GM12878 (cell line): ENCODE measurements at regions of chr11 and their contacts with region 1.

Region 1: DNA sequence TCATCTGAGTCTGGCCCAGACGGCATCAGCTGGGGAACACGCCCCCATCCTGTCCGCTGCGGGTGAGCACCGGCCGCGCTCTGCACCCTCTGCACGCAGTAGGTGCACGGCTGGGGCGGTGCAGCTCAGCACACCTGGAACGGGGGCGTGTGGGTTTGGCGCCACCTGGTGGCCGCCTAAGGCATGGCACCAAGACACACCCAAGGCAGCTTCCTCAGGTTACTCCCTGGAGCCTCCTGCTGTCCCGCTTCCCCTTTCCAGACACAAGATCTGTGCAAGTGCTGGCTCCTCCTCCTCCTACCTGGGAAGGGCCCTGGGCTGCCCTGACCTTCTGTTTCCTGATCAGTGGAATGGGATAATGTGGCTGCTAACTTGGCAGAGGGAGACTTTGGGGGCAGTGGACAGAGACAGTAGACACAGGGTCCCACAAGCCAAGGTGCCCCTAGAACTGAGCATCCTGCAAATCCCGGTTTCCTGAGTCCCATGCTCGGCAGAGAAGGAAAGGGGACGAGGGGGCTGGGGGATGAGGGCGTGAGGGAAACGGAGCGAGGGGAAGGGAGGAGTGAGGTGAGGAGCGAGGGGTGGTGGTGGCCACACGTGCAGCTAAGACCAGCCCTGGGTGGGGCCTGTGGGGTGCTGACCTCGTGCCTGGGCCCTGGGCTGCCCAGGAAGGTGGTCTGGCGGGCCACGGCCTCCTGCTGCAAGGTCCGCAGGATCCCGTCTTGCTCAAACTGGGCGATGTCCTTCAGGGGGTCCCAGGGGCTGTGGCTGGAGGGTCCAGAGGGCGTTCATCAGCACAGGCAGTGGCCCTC is 34.8 kb upstream of the CARS1 start:
- DNase-seq: peak; percentile 19
- ATAC-seq: peak; percentile 97
- H3K4me3 ChIP-seq: no peak overlapping the region
- H3K27ac ChIP-seq: no peak overlapping the region
- H3K4me1 ChIP-seq: no peaks in the 10 kb centered on the region
- H3K27me3 ChIP-seq: no peaks in the 10 kb centered on the region
- CTCF ChIP-seq: peak; percentile 98
- EP300 ChIP-seq: no peak
- POLR2A ChIP-seq: no peak
- RAD21 ChIP-seq: peak; percentile 85

Region 2: GRCh38 chr11:2892215-2893020 is 199.6 kb before region 1 on chr11:
- CTCF ChIA-PET with region 1: interaction called, 11 read pairs
- POLR2A ChIA-PET with region 1: no interaction called
- RAD21 ChIA-PET with region 1: interaction called, 8 read pairs
- SMC1A ChIA-PET with region 1: interaction called, 3 read pairs
- in situ Hi-C with region 1: no loop called
- intact Hi-C with region 1: no loop called
- DNase-seq: no peak
- ATAC-seq: peak; percentile 80
- H3K4me3 ChIP-seq: peak overlapping the region; percentile 58
- H3K27ac ChIP-seq: no peak overlapping the region
- H3K4me1 ChIP-seq: peaks cover 4% of the 10 kb centered on the region
- H3K27me3 ChIP-seq: no peaks in the 10 kb centered on the region
- CTCF ChIP-seq: peak; percentile 82 to 92 (median 83)
- EP300 ChIP-seq: no peak
- POLR2A ChIP-seq: peak; percentile 59; the same call in 1 of the 2 replicates
- RAD21 ChIP-seq: peak; percentile 67

Region 3: DNA sequence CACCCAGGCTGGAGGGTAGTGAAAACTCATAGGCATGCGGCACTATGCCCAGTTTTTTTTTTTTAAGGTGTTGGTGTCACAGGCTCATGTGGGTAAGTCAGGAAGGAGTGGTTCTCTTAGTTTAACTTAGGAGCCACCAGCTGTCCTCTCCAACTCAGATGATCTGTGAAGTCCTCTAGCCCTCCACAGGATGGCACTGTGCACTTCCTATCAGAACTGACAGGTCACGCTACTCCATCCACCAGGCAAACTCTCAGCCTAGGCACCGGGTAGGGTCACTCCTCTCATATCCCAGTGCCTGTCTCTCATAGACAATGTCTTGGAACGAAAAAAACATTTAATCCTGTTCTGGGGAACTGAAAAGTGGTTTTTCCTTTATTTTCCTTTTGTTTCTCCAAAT is 116.4 kb before region 1 on chr11:
- CTCF ChIA-PET with region 1: interaction called, 41 read pairs
- POLR2A ChIA-PET with region 1: no interaction called
- RAD21 ChIA-PET with region 1: interaction called, 12 read pairs
- SMC1A ChIA-PET with region 1: interaction called, 4 read pairs
- in situ Hi-C with region 1: no loop called
- intact Hi-C with region 1: loop called (anchors 10 kb)
- DNase-seq: no peak
- ATAC-seq: peak; percentile 94
- H3K4me3 ChIP-seq: no peak overlapping the region
- H3K27ac ChIP-seq: no peak overlapping the region
- H3K4me1 ChIP-seq: no peaks in the 10 kb centered on the region
- H3K27me3 ChIP-seq: no peaks in the 10 kb centered on the region
- CTCF ChIP-seq: peak; percentile 48 to 65 (median 60); a peak in 4 of 6 replicates
- EP300 ChIP-seq: no peak
- POLR2A ChIP-seq: no peak
- RAD21 ChIP-seq: peak; percentile 66

Region 4: GRCh38 chr11:3014057-3014938 is 77.7 kb before region 1 on chr11:
- CTCF ChIA-PET with region 1: interaction called, 10 read pairs
- POLR2A ChIA-PET with region 1: no interaction called
- RAD21 ChIA-PET with region 1: interaction called, 3 read pairs
- SMC1A ChIA-PET with region 1: interaction called, 8 read pairs
- in situ Hi-C with region 1: no loop called
- intact Hi-C with region 1: no loop called
- DNase-seq: no peak
- ATAC-seq: peak; percentile 88
- H3K4me3 ChIP-seq: no peak overlapping the region
- H3K27ac ChIP-seq: peak overlapping the region; percentile 34; the same call in 1 of the 2 replicates
- H3K4me1 ChIP-seq: peaks cover 17% of the 10 kb centered on the region
- H3K27me3 ChIP-seq: no peaks in the 10 kb centered on the region
- CTCF ChIP-seq: peak in 1 of 3 experiments; percentile 7; a peak in 1 of 6 replicates
- EP300 ChIP-seq: no peak
- POLR2A ChIP-seq: no peak
- RAD21 ChIP-seq: no peak

Region 5: DNA sequence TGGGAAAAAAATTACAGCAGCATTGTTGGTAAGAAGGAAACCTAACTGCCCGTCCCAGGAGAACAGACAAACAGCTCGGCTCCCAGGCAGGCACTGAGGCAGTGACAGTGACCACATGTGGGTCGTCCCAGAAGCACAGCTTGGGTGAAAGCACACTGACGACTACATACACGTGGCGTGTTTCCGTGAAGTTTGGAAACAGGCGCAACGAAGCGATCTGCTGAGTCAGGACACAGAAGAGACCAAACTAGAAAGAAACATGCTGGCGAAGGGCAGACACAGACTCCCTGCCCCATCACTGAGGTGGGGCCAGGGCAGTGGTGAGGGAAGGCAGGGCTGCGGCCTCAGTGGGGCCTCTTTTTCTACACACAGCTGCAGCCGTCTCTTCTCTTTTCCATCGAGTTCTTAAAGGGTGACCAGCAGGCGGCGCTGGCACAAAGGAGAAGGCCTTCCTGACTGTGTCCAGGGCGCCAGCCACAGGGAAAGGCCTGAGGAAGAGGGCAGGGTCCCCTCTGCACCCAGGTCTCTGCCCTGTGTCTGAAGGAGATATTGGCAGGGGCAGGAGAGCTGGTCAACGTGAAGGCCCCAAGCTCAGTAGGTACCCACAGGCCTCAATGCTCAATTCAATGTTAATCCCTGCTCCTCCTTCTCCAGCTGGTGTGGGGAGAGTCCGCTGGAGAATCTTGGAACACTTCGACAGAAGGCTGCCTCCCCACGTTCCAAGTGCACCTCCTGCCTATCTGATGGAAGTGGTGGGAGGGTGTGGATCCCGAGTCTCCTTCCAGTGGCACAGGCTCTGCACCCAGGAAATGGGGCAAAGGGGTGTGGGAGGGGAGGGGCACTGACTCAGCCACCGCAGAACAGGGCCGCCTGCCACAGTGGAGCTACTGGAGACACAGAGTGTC is 54.7 kb before region 1 on chr11:
- CTCF ChIA-PET with region 1: interaction called, 143 read pairs
- POLR2A ChIA-PET with region 1: interaction called, 3 read pairs
- RAD21 ChIA-PET with region 1: interaction called, 51 read pairs
- SMC1A ChIA-PET with region 1: interaction called, 47 read pairs
- in situ Hi-C with region 1: loop called (anchors 5 kb)
- intact Hi-C with region 1: loop called (anchors 1 kb)
- DNase-seq: no peak
- ATAC-seq: peak; percentile 86
- H3K4me3 ChIP-seq: no peak overlapping the region
- H3K27ac ChIP-seq: peak overlapping the region; percentile 69
- H3K4me1 ChIP-seq: peaks cover 29% of the 10 kb centered on the region
- H3K27me3 ChIP-seq: no peaks in the 10 kb centered on the region
- CTCF ChIP-seq: peak; percentile 46 to 75 (median 68)
- EP300 ChIP-seq: no peak
- POLR2A ChIP-seq: 0 out of 2 replicates have a peak, but pooled peaks have one; percentile 22
- RAD21 ChIP-seq: peak; percentile 60

Region 6: GRCh38 chr11:3049430-3050243 is 42.4 kb before region 1 on chr11:
- CTCF ChIA-PET with region 1: interaction called, 95 read pairs
- POLR2A ChIA-PET with region 1: interaction called, 3 read pairs
- RAD21 ChIA-PET with region 1: interaction called, 58 read pairs
- SMC1A ChIA-PET with region 1: interaction called, 52 read pairs
- in situ Hi-C with region 1: loop called (anchors 5 kb)
- intact Hi-C with region 1: loop called (anchors 5 kb)
- DNase-seq: peak; percentile 82
- ATAC-seq: peak; percentile 97
- H3K4me3 ChIP-seq: peak overlapping the region; percentile 50
- H3K27ac ChIP-seq: peak overlapping the region; percentile 81
- H3K4me1 ChIP-seq: peaks cover 32% of the 10 kb centered on the region
- H3K27me3 ChIP-seq: no peaks in the 10 kb centered on the region
- CTCF ChIP-seq: peak; percentile 41 to 78 (median 53); a peak in 4 of 6 replicates
- EP300 ChIP-seq: peak in 1 of 2 experiments; percentile 23; a peak in 1 of 4 replicates
- POLR2A ChIP-seq: peak; percentile 44
- RAD21 ChIP-seq: peak; percentile 54